Activated CD4-positive, alpha-beta T cell treated with anti-CD3 and anti-CD28 coated beads for 36 hours (primary cell): ENCODE measurements at regions of chr19 and their contacts with region 1.

Region 1: DNA sequence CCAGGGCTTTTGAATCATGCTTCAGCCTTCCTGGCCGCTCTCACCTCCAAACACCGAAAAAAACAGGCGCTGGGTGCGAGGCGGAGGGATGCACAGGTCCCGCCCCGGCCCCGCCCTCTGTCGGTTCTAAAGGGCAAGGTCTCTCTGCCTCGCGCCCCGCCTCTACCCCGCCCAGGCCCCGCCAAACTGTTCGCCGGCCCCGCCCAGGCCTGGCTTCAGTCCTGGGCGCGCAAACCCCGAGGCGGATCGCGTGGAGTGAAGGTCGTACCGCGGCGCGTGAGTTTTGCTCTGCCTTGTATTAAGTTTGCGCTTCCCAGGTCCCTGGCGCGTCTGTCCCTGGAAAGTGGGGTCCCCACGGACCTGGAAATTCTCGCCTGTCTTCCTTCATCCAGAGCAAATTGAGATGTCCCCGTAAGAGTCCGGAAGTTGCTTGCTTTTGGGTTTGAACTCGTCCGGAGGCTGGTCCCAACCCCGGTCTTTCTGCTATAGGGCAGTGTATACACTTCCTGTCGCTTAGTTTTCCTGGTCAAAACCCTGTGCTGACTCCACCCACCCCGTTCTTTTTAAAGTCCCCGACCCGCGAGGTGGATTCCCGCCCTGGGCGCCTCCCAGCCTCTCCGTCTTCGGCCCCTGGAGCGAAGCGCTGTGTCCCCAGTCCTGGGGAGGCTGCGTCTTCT is 8.4 kb downstream of the ZNF808 start:
- DNase-seq: peak; percentile 97
- ATAC-seq: peak; percentile 94
- H3K4me3 Mint-ChIP-seq: peak overlapping the region; percentile 83
- H3K27ac Mint-ChIP-seq: peak overlapping the region; percentile 94
- H3K4me1 Mint-ChIP-seq: peaks cover 28% of the 10 kb centered on the region
- H3K27me3 Mint-ChIP-seq: no peaks in the 10 kb centered on the region

Region 2: DNA sequence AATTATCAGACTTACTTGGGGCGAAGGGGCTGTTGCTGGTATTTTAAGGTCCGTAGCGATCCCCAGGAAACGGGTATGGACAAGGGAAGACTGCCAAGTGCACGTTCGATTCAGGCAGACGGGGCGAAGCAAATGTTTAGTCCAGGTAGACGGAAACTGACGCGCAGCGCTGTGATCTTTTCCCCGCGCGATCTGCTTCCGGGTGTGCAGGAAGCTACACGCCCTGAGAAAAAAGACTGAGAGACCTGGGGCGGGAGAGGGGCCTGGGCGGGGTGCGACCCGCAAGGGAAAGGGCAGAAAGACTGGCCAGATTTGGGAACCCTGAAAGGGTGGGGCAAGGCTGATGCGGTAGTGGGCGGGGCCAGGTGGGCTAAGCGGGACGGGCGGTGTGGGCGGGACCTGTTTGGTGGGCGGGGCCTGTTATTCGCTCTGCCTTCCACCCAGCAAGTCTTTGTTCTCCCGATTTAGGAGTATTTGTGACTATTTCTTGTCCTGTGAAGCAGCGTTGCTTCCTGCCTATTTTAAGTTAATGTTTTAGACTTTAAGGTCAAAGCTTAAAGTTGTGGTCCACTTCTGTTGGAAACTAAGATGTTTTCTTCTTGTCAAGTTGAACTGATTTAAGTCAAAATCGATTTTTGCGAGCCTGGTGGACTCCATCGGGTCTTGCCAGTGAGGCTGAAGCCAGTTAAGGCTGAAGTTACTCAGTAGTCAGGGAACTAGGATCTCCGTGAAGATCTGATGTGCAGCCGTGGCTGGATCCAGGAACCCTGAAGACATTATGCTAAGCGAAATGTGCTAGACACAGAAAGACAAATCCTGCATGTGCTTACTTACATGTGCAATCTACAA is 364.4 kb before region 1 on chr19 and contains the start of gene ZNF836:
- CTCF ChIA-PET with region 1: no interaction called
- POLR2A ChIA-PET with region 1: no interaction called
- intact Hi-C with region 1: loop called in 1 of 2 experiments (anchors 2 kb)
- DNase-seq: peak; percentile 96
- ATAC-seq: peak; percentile 96
- H3K4me3 Mint-ChIP-seq: peak within 1 kb of the TSS; percentile 87
- H3K27ac Mint-ChIP-seq: peak within 1 kb of the TSS; percentile 93
- H3K4me1 Mint-ChIP-seq: peaks cover 17% of the 10 kb centered on the region
- H3K27me3 Mint-ChIP-seq: no peaks in the 10 kb centered on the region
- total RNA-seq, gene ZNF836: 10.1 to 11.5 TPM

Region 3: DNA sequence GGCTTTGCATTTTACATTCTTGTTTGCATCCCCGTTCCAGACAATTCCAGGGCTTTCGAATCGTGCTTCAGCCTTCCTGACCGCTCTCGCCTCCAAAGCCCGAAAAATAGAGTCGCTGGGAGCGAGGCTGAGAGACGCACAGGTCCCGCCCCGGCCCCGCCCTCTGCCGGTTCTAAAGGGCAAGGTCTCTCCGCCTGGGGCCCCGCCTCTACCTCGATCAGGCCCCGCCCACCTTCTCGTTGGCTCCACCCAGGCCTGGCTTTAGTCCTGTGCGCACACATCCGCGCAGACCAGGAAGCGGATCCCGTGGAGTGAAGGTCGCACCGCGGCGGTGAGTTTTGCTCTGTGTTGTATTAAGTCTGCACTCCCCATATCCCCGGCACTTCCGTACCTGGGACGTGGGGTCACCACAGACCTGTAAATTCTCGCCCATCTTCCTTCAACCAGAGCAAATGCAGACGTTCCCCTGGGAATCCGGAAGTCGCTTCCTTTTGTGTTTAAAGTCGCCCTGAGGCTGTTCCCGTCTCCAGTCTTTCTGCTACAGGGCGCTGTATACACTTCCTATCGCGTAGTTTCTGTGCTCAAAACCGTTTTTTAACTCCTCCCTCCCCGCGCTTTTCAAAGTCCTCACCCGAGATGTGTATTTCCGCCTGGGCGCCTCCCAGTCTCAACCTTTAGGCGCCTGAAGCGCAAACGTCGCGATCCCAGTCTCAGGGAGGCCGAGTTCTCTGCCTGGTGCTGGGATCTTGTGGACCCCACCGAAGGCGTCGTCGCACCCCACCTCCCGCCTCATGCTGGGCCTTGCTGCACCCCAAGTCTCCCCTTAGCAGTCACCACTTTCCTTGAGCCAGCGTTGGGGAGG is 34.3 kb after region 1 on chr19 and contains the start of gene ZNF701:
- CTCF ChIA-PET with region 1: no interaction called
- POLR2A ChIA-PET with region 1: no interaction called
- intact Hi-C with region 1: loop called (anchors 1 kb)
- DNase-seq: peak; percentile 98
- ATAC-seq: peak; percentile 99
- H3K4me3 Mint-ChIP-seq: peak within 1 kb of the TSS; percentile 88
- H3K27ac Mint-ChIP-seq: peak within 1 kb of the TSS; percentile 96
- H3K4me1 Mint-ChIP-seq: peaks cover 27% of the 10 kb centered on the region
- H3K27me3 Mint-ChIP-seq: no peaks in the 10 kb centered on the region
- total RNA-seq, gene ZNF701: 19.0 to 21.5 TPM

Region 4: DNA sequence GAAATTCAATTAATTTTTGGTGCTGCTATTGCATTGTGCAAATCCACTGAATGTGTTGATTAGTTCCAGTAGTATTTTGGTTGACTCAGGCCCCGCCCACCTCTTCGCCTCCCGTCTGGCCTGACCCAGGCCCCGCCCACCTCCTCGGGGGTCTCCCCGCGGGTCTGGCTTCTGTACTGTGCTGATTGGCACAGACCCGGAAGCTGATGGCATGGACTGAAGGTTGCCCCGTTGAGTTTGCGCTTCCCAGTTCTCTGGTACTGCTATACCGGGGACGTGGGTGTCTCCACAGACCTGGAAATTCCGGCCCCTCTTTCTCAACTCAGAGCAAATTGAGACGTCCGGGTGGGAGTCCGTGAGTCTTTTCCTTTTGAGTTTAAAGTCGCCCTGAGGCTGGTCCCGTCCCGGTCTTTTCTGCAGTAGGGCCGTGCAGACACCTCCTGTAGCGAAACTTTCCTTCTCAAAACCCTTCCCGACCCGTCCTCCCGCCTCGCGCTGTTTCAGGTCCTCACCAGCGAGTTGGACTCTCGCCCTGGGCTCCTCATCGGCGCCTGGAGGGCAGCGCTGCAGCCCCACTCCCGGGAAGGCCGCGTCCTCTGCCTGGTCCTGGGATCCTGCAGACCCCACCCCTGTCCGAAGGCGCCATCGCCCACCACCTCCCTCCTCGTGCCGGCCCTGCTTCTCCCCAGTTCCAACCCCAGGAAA is 49.0 kb after region 1 on chr19:
- CTCF ChIA-PET with region 1: no interaction called
- POLR2A ChIA-PET with region 1: no interaction called
- intact Hi-C with region 1: no loop called
- DNase-seq: no peak
- ATAC-seq: no peak
- H3K4me3 Mint-ChIP-seq: no peak overlapping the region
- H3K27ac Mint-ChIP-seq: no peak overlapping the region
- H3K4me1 Mint-ChIP-seq: no peaks in the 10 kb centered on the region
- H3K27me3 Mint-ChIP-seq: no peaks in the 10 kb centered on the region